Activated naive CD4-positive, alpha-beta T cell treated with anti-CD3 and anti-CD28 coated beads for 36 hours (primary cell): ENCODE measurements at regions of chr11 and their contacts with region 1.

Region 1: DNA sequence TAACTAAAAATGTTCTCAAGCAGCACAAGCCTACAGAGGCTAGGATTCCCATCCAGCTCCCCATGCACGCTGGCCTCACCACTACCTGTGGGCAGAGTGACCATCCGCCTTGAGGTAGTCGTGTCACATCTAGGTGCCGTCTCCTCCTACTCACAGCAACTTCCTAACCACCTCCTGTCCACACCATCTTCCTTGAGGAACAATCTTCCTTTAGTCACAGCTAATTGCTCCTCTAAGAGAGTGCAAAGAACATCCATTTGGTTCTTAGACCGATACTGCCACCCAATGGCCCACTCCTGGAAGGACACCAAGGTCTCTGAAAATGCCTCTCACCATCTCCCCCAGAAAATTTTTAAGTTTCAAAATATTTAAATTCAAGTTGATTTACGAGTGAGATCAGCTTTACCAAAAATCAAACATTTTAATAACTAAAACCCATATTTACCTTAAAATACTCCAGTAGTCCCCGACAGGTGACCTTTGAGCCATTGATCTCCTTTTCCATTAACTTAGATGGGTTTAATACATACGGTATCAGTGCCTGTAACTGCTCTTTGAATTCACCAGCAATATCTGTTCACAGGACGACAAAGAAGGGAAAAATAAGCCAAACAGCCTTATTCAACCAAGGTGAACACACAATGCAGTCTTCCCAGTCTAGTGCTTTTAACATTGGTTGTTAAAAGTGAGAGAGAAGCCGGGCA is 21.7 kb upstream of the PLAAT3 start:
- DNase-seq: peak; percentile 82
- H3K4me3 Mint-ChIP-seq: no peak overlapping the region
- H3K27ac Mint-ChIP-seq: no peak overlapping the region
- H3K4me1 Mint-ChIP-seq: peaks cover 13% of the 10 kb centered on the region
- H3K27me3 Mint-ChIP-seq: no peaks in the 10 kb centered on the region

Region 2: DNA sequence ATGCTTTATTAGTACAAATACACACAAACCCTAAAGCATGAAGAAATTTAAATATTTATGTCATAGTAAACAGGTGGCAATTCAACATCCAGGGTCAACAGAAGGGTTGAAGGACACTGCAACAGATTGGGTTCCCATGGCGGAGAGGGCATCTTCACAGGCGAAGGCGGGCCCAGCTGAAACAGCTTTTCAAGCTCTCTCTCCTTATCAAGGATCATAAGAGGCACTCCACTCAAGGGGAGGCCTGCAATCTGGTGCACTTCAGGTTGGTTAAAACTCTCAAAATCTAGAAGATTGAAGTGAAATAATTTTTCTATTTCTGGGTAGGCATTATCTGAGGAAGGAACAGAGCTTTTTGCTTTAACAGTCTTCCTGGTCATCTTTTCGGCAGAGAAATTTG is 603.5 kb before region 1 on chr11:
- CTCF ChIA-PET with region 1: no interaction called
- intact Hi-C with region 1: loop called (anchors 1 kb)
- DNase-seq: no peak
- H3K4me3 Mint-ChIP-seq: no peak overlapping the region
- H3K27ac Mint-ChIP-seq: no peak overlapping the region
- H3K4me1 Mint-ChIP-seq: no peaks in the 10 kb centered on the region
- H3K27me3 Mint-ChIP-seq: peaks cover 10% of the 10 kb centered on the region

Region 3: GRCh38 chr11:63478896-63479295 is 157.0 kb before region 1 on chr11:
- CTCF ChIA-PET with region 1: interaction called, 93 read pairs
- intact Hi-C with region 1: loop called (anchors 1 kb)
- DNase-seq: peak; percentile 65
- H3K4me3 Mint-ChIP-seq: no peak overlapping the region
- H3K27ac Mint-ChIP-seq: no peak overlapping the region
- H3K4me1 Mint-ChIP-seq: no peaks in the 10 kb centered on the region
- H3K27me3 Mint-ChIP-seq: no peaks in the 10 kb centered on the region

Region 4: DNA sequence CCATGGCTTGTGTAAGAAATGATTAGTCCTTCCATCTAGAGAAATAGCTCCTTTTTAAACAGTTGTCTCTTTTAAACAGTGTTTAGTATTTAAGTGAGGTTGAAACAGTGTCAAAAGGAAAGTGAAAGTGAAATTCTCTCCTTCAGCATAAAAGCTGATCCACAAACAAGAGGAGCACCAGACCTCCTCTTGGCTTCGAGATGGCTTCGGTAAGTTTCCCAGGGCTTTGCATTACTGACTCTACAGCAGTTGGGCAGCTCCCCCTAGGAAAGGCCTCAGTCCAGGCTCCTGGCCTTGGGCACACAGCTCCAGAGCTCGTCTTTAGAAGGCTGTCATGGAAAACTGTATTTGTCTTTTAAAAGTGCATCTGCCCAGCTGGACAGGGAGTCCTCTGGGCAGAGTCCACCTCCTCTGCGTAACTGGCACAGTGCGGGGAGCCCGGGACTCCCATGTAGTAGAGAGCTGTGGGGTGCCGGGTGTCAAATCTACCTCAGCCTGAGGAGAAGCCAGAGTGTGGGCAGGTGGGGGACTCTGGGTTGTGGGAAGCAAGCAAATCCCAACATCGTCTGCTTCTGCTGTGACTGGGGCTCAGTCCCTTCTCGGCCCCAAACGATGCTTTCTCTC is 99.1 kb before region 1 on chr11 and contains the start of gene PLAAT4:
- CTCF ChIA-PET with region 1: no interaction called
- intact Hi-C with region 1: loop called (anchors 5 kb)
- DNase-seq: peak; percentile 42
- H3K4me3 Mint-ChIP-seq: peak within 1 kb of the TSS; percentile 72
- H3K27ac Mint-ChIP-seq: peak within 1 kb of the TSS; percentile 69
- H3K4me1 Mint-ChIP-seq: peaks cover 76% of the 10 kb centered on the region
- H3K27me3 Mint-ChIP-seq: no peaks in the 10 kb centered on the region
- total RNA-seq, gene PLAAT4: 16.1 to 16.6 TPM

Region 5: GRCh38 chr11:63553741-63554151 is 82.2 kb before region 1 on chr11:
- CTCF ChIA-PET with region 1: interaction called, 4 read pairs
- intact Hi-C with region 1: loop called (anchors 5 kb)
- DNase-seq: peak; percentile 77
- H3K4me3 Mint-ChIP-seq: peak overlapping the region; percentile 59
- H3K27ac Mint-ChIP-seq: peak overlapping the region; percentile 83
- H3K4me1 Mint-ChIP-seq: peaks cover 48% of the 10 kb centered on the region
- H3K27me3 Mint-ChIP-seq: no peaks in the 10 kb centered on the region

Region 6: GRCh38 chr11:63738720-63739360 is 102.9 kb after region 1 on chr11:
- CTCF ChIA-PET with region 1: interaction called, 32 read pairs
- intact Hi-C with region 1: loop called (anchors 1 kb)
- DNase-seq: peak; percentile 86
- H3K4me3 Mint-ChIP-seq: no peak overlapping the region
- H3K27ac Mint-ChIP-seq: no peak overlapping the region
- H3K4me1 Mint-ChIP-seq: peaks cover 2% of the 10 kb centered on the region
- H3K27me3 Mint-ChIP-seq: no peaks in the 10 kb centered on the region